BJ (cell line): ENCODE measurements at regions of chr2 and their contacts with region 1.

Region 1: DNA sequence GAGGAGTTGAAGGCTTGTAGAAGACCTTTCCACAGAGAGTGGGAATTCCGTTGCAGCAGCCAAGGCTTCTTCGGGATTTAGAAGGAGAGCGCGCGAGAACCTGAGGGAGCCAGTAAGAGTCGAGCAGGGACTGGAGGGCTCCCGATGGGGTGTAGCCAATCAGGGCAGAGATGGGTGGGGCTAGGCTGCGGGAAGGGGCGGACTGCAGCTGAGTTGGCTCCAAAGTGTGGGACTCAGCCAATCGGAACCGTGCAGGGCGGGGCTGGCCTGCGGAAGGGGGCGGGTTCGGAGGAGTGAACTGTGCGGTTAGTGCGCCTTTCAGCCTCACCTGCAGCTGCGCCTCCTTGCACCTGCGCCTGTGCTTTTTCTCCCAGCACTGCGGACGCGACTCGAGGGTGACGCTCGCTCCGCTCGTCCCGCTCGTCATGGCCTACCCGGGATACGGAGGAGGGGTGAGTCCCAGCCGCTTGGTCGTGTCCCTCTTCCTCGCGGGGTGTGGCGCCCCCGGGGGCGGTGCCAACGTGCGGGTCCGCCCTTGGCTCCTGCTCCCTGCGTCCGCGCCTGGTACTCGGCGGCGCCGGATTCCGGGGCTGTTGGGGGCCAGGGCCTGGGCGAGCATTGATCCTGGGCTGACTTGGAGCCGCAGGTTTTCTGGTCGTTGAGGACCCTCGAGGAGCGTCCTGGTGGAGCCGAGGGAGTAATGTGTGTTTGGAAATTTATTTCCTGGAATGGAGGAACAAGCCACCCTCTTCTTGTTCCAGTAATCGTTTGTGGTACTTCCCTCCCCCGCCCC is at the start of gene GCA:
- DNase-seq: peak; percentile 85
- H3K4me3 ChIP-seq: peak within 1 kb of the TSS; percentile 77
- H3K27me3 ChIP-seq: no peaks in the 10 kb centered on the region
- CTCF ChIP-seq: no peak
- polyA plus RNA-seq, gene GCA: 5.2 and 6.2 TPM in 2 replicates

Region 2: DNA sequence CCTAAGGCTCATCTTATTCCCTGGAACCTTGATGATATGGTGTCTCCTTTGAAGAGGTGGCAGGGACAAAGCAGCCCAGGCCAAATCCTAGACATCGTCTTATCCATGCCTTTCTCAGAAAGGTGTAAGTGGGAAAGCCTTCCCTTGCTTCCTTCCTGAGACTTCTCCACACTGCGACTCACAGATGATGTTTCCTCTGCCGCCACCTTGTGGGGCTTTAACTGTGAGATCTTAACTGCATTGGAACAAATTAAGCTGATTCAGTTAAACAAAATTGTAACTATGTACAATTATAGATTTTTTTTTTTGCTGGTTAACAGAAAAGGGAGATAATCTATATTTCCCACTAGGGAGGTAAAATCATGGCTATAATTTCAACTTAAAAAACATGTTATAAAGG is 10.1 kb before region 1 on chr2:
- CTCF ChIA-PET with region 1: interaction called, 10 read pairs
- POLR2A ChIA-PET with region 1: no interaction called
- DNase-seq: no peak
- H3K4me3 ChIP-seq: no peak overlapping the region
- H3K27me3 ChIP-seq: peaks cover 1% of the 10 kb centered on the region; the same call in 1 of the 2 replicates
- CTCF ChIP-seq: peak; percentile 55